Spleen (tissue), 13 donors: ENCODE measurements at regions of chr13 and their contacts with region 1.

Region 1: DNA sequence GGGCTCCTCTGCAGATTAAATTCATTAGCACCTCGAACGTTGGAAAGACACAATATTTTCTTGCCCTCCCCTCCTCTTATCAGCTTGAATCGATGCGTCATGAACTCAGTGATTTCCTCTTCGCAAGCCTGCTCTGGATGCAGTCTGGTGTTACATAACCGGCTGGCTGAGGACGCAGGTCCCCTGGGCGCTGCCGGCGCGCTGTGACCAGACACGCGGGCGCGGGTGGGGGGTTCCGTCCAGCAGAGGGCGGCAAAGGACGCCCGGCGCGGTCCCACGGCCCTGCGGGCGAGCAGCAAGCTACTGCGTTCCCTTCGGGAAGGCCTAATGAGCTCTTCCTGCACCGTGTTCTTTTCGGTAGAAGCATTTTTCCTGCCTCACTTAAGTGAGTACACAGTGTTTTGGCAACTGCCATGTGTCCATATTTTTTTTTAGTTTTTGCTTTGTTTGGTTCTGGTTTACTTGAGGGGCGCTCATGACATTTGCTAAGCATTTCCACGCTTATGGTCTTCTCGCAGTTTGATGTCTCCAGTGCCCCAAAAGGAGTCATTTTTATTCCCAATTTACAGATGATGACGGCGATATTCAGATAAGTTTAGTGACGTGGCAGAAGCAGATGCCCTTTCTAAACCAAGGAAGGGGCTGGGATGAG is 112.2 kb upstream of the MBNL2 start:
- DNase-seq: peak; percentile 95
- H3K4me3 ChIP-seq: peak overlapping the region in 1 of 8 donors; percentile 27
- H3K27ac ChIP-seq: no peak overlapping the region
- H3K4me1 ChIP-seq: peaks cover 5 to 23% (median 9%) of the 10 kb centered on the region in 6 donors
- H3K27me3 ChIP-seq: peaks cover 0 to 18% (median 0%) of the 10 kb centered on the region in 7 donors
- CTCF ChIP-seq: peak; percentile 81 to 98 (median 95)
- POLR2A ChIP-seq: no peak

Region 2: DNA sequence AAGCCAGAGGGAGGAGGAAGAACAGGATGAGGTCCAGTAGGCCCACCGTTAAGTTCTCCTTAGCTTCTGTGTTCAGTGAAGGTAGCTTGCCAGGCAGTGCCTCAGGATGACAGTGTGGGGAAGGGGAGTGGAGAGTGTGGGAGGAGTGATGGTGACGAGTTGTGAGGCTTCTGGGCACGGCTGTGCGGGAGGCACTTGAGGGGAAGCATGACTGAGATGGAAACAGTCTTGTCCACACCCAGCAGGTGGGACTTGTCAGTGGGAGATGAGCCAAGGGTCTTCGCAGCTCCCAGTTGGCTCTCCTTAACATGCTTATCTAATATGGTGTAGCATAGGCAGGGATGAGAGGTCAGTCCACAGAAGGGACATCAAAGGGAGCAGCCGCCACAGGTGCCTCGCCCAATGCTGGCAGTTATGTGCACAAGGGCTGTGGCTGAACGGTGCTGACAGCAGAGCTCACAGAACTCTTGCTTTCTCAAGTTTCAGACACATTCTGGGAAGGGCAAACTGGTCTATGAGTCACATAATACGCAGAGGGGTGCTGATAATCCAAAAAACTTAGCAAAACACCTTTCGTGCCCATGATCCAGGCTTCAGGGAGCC is 163.2 kb before region 1 on chr13:
- intact Hi-C with region 1: no loop called
- DNase-seq: no peak
- H3K4me3 ChIP-seq: no peak overlapping the region
- H3K27ac ChIP-seq: no peak overlapping the region
- H3K4me1 ChIP-seq: no peaks in the 10 kb centered on the region
- H3K27me3 ChIP-seq: no peaks in the 10 kb centered on the region
- CTCF ChIP-seq: no peak
- POLR2A ChIP-seq: no peak

Region 3: DNA sequence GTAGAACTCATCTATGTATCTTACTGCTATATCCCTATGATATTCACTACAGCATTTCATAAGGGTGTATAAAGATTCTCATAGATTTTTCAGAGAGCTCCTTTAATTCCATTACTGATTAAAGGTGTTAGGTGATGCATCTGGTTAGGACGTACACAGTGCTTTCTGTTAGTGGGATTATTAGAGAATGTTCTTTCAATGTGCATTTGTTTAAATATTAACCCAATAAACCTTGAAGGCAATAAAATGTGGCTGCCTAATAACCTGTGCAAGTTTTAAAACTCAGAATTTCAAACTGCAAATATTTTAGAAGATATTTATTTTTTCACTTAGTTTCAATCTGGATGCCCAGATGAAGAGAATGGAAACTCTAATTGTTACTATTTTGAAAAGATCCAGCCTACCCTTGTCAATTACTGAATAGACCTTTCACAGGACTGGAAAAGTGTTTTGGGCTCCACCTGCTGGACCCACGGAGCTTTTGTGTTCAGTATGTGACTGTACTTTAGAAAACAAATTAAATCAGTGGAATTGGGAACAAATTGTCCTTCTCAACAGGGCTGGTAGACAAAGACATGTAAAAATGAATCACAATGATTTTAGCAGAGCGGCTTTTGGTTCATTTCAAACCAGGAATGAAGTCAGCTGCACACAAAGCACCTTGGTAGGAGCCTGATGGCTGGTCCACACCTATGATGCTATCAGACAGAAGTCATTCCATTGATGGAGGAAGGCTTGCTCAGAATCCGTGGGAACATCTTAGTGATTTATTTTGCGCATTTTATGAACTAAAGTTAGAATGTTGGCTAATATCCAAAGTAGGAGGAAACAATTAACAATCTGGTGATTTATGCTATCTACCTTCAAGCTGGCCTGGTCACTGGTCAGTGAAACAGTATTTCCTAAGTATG is 234.6 kb after region 1 on chr13:
- intact Hi-C with region 1: loop called (anchors 5 kb)
- DNase-seq: no peak
- H3K4me3 ChIP-seq: no peak overlapping the region
- H3K27ac ChIP-seq: no peak overlapping the region
- H3K4me1 ChIP-seq: peaks cover 0 to 8% (median 0%) of the 10 kb centered on the region in 6 donors
- H3K27me3 ChIP-seq: no peaks in the 10 kb centered on the region
- CTCF ChIP-seq: peak in 10 of 11 experiments; percentile 15 to 65 (median 50)
- POLR2A ChIP-seq: no peak

Region 4: GRCh38 chr13:97359181-97360057 is 249.5 kb after region 1 on chr13:
- intact Hi-C with region 1: loop called (anchors 5 kb)
- DNase-seq: no peak
- H3K4me3 ChIP-seq: no peak overlapping the region
- H3K27ac ChIP-seq: no peak overlapping the region
- H3K4me1 ChIP-seq: peaks cover 0 to 7% (median 0%) of the 10 kb centered on the region in 6 donors
- H3K27me3 ChIP-seq: no peaks in the 10 kb centered on the region
- CTCF ChIP-seq: peak; percentile 38 to 83 (median 78)
- POLR2A ChIP-seq: no peak